ENCODE measurements at regions of chr1 and their contacts with region 1.

Region 1: DNA sequence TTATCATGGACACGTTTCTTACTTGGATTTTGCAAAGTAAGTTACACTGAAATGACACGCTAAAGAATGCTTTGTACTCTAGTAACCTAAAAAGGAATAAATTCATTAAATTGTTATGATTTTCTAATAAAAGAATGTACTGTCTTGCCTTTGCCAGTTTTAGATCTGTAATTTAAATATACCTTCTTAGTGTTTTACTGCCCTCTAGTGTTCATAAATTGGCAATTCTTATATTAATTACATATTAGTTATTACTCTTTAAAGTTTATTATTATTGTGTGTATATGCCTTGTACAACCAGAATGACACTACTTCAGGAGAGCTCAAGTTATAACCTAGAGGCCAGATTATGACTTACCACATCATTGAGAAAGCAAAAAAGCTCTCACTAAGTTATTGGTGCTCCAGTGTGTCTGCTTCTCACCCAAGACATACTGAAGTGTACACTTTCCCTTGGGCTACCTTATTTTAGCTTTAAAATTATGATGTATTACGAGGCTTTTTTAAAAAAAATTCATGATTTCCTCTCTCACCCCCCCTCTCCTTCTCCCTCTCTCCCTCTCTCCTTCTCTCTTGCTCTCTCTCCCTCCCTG is 169.9 kb downstream of the HS2ST1 start:
- DNase-seq: peak; percentile 60
- ATAC-seq: peak; percentile 78
- H3K4me3 ChIP-seq: no peak overlapping the region
- H3K27ac ChIP-seq: no peak overlapping the region
- H3K4me1 ChIP-seq: peaks cover 2% of the 10 kb centered on the region; the same call in 1 of the 2 replicates
- H3K27me3 ChIP-seq: no peaks in the 10 kb centered on the region
- CTCF ChIP-seq: peak; percentile 64
- POLR2A ChIP-seq: no peak
- RAD21 ChIP-seq: peak; percentile 60

Region 2: GRCh38 chr1:86395771-86396497 is 688.4 kb before region 1 on chr1 and contains the start of gene ODF2L:
- CTCF ChIA-PET with region 1: no interaction called
- POLR2A ChIA-PET with region 1: no interaction called
- dilution Hi-C with region 1: no loop called
- in situ Hi-C with region 1: loop called (anchors 25 kb)
- intact Hi-C with region 1: no loop called
- DNase-seq: peak; percentile 74
- ATAC-seq: peak; percentile 100
- H3K4me3 ChIP-seq: peak within 1 kb of the TSS; percentile 84
- H3K27ac ChIP-seq: peak within 1 kb of the TSS; percentile 88
- H3K4me1 ChIP-seq: peaks cover 2% of the 10 kb centered on the region; the same call in 1 of the 2 replicates
- H3K27me3 ChIP-seq: peaks cover 4% of the 10 kb centered on the region; the same call in 1 of the 2 replicates
- CTCF ChIP-seq: no peak
- POLR2A ChIP-seq: peak; percentile 78
- RAD21 ChIP-seq: no peak
- total RNA-seq, gene ODF2L: 10.4 and 20.0 TPM in 2 replicates

Region 3: GRCh38 chr1:86460998-86461397 is 623.3 kb before region 1 on chr1:
- CTCF ChIA-PET with region 1: no interaction called
- POLR2A ChIA-PET with region 1: no interaction called
- dilution Hi-C with region 1: no loop called
- in situ Hi-C with region 1: no loop called
- intact Hi-C with region 1: no loop called
- DNase-seq: no peak
- ATAC-seq: no peak
- H3K4me3 ChIP-seq: no peak overlapping the region
- H3K27ac ChIP-seq: no peak overlapping the region
- H3K4me1 ChIP-seq: no peaks in the 10 kb centered on the region
- H3K27me3 ChIP-seq: peaks cover 4% of the 10 kb centered on the region
- CTCF ChIP-seq: no peak
- POLR2A ChIP-seq: no peak
- RAD21 ChIP-seq: no peak

Region 4: DNA sequence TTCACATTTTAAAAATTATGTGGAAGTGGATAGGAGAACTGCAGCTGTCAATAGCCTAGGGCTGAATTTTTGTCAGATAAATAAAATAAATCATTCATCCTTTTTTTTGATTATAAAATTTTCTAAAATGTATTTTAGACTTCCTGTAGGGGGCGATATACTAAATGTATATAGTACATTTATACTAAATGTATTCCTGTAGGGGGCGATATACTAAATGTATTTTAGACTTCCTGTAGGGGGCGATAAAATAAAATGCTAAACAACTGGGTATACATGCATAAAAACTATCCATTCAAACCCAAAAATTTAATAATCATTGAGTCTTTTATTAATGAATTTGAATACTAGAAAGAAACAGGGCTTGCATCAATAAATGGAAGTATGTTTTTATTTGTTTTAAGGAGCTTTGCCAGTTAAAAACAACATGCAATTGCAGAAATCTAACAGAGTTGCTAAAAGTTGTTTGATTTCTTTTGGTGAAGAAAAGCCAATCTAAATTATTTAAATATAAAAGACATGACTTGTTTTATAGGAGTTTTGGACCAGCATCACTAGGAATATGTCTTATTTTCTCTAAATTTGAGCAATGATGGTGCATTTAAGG is 584.2 kb before region 1 on chr1:
- CTCF ChIA-PET with region 1: no interaction called
- POLR2A ChIA-PET with region 1: no interaction called
- dilution Hi-C with region 1: no loop called
- in situ Hi-C with region 1: loop called (anchors 25 kb)
- intact Hi-C with region 1: no loop called
- DNase-seq: peak; percentile 32
- ATAC-seq: no peak
- H3K4me3 ChIP-seq: no peak overlapping the region
- H3K27ac ChIP-seq: no peak overlapping the region
- H3K4me1 ChIP-seq: peaks cover 2% of the 10 kb centered on the region
- H3K27me3 ChIP-seq: peaks cover 10% of the 10 kb centered on the region
- CTCF ChIP-seq: peak; percentile 100; the same call in 1 of the 2 replicates
- POLR2A ChIP-seq: no peak
- RAD21 ChIP-seq: peak; percentile 24; the same call in 1 of the 2 replicates

Region 5: GRCh38 chr1:86779308-86780191 is 304.8 kb before region 1 on chr1:
- CTCF ChIA-PET with region 1: no interaction called
- POLR2A ChIA-PET with region 1: no interaction called
- dilution Hi-C with region 1: no loop called
- in situ Hi-C with region 1: no loop called
- intact Hi-C with region 1: loop called (anchors 1 kb)
- DNase-seq: peak; percentile 92
- ATAC-seq: peak; percentile 48
- H3K4me3 ChIP-seq: no peak overlapping the region
- H3K27ac ChIP-seq: peak overlapping the region; percentile 6; the same call in 1 of the 2 replicates
- H3K4me1 ChIP-seq: peaks cover 19% of the 10 kb centered on the region
- H3K27me3 ChIP-seq: no peaks in the 10 kb centered on the region
- CTCF ChIP-seq: no peak
- POLR2A ChIP-seq: no peak
- RAD21 ChIP-seq: no peak

Measured in IMR-90 (cell line).